ENCODE measurements at regions of chr9 and their contacts with region 1.

Region 1: GRCh38 chr9:127503947-127504782 is 52.9 kb downstream of the LRSAM1 start:
- DNase-seq: peak; percentile 77
- H3K4me3 ChIP-seq: no peak overlapping the region
- H3K27ac ChIP-seq: peak overlapping the region in 2 of 3 donors; percentile 5 to 49
- H3K4me1 ChIP-seq: no peaks in the 10 kb centered on the region
- H3K27me3 ChIP-seq: no peaks in the 10 kb centered on the region
- CTCF ChIP-seq: peak; percentile 47 to 85 (median 74)
- POLR2A ChIP-seq: no peak

Region 2: GRCh38 chr9:127916665-127917613 is 412.8 kb after region 1 on chr9 and contains the start of gene ST6GALNAC4:
- intact Hi-C with region 1: loop called (anchors 10 kb)
- DNase-seq: peak; percentile 94
- H3K4me3 ChIP-seq: peak within 1 kb of the TSS; percentile 12 to 61 (median 57)
- H3K27ac ChIP-seq: peak within 1 kb of the TSS in 2 of 3 donors; percentile 24 to 46
- H3K4me1 ChIP-seq: peaks cover 21 to 55% of the 10 kb centered on the region in 2 donors
- H3K27me3 ChIP-seq: no peaks in the 10 kb centered on the region
- CTCF ChIP-seq: no peak
- POLR2A ChIP-seq: peak in 1 of 2 donors; percentile 44
- total RNA-seq, gene ST6GALNAC4: 8.9 to 27.4 (median 19.1) TPM

Region 3: GRCh38 chr9:128361986-128362646 is 858.0 kb after region 1 on chr9:
- intact Hi-C with region 1: no loop called
- DNase-seq: peak; percentile 87 to 88
- H3K4me3 ChIP-seq: peak overlapping the region in 1 of 3 donors; percentile 25
- H3K27ac ChIP-seq: peak overlapping the region in 2 of 3 donors; percentile 34 to 74
- H3K4me1 ChIP-seq: peaks cover 6 to 20% of the 10 kb centered on the region in 2 donors
- H3K27me3 ChIP-seq: no peaks in the 10 kb centered on the region
- CTCF ChIP-seq: peak; percentile 61 to 96 (median 92)
- POLR2A ChIP-seq: peak in 1 of 2 donors; percentile 22